ENCODE measurements at regions of chrX and their contacts with region 1.

Region 1: DNA sequence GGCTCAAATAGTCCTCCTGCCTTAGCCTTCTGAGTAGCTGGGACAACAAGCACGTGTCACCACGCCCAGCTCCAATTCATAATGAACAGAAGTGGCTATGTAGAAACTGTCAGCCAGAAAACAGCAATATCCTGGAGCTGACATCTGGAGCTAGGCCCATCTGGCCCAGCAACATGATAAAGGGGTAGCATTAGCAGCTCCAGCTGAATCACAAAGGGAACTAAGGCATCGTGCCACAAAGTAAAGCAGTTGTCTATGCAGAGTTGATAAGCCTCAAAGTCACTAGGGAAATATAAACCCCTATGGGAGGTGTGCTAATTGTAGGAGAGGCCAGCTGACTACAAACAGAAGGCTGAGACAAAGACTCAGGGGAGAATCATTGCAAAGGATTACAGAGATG is 270.5 kb upstream of the GPC4 start:
- DNase-seq: no peak
- H3K4me3 ChIP-seq: no peak overlapping the region
- H3K27ac ChIP-seq: no peak overlapping the region
- H3K4me1 ChIP-seq: peaks cover 0 to 5% (median 0%) of the 10 kb centered on the region in 4 experiments; a peak in 2 of 7 replicates
- H3K27me3 ChIP-seq: no peaks in the 10 kb centered on the region
- CTCF ChIP-seq: no peak
- EP300 ChIP-seq: no peak
- POLR2A ChIP-seq: no peak
- RAD21 ChIP-seq: no peak

Region 2: GRCh38 chrX:133698298-133698697 is 12.5 kb after region 1 on chrX:
- CTCF ChIA-PET with region 1: interaction called, 11 read pairs
- POLR2A ChIA-PET with region 1: no interaction called
- DNase-seq: no peak
- H3K4me3 ChIP-seq: no peak overlapping the region
- H3K27ac ChIP-seq: no peak overlapping the region
- H3K4me1 ChIP-seq: peaks cover 0 to 2% (median 1%) of the 10 kb centered on the region in 4 experiments; a peak in 3 of 7 replicates
- H3K27me3 ChIP-seq: no peaks in the 10 kb centered on the region; a peak in 1 of 7 replicates
- CTCF ChIP-seq: no peak
- EP300 ChIP-seq: no peak
- POLR2A ChIP-seq: no peak
- RAD21 ChIP-seq: peak; percentile 19 to 36; a peak in 3 of 4 replicates